ENCODE measurements at regions of chr11 and their contacts with region 1.

Region 1: DNA sequence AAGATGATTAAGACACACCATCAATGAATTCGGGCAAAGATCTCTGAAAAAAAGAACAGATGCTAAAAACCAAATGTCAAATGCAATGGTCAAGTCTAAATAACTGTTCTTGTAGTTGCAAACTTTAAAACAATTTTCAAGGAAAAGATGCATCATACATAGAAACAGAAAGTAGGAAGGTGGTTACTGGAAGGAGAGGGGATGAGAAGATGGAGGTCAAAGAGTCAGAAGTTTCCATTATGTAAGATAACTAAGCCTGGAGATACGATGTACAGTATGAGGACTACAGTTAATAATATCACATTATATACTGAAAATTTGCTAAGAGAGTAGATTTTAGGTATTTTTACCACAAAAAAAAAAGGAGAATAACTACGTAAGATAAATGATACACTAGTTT is 27.1 kb downstream of the CWF19L2 start:
- DNase-seq: no peak
- ATAC-seq: no peak
- H3K4me3 ChIP-seq: no peak overlapping the region
- H3K4me3 Mint-ChIP-seq: no peak overlapping the region
- H3K27ac ChIP-seq: no peak overlapping the region
- H3K27ac Mint-ChIP-seq: no peak overlapping the region
- H3K4me1 ChIP-seq: no peaks in the 10 kb centered on the region
- H3K4me1 Mint-ChIP-seq: peaks cover 6% of the 10 kb centered on the region
- H3K27me3 ChIP-seq: no peaks in the 10 kb centered on the region
- H3K27me3 Mint-ChIP-seq: no peaks in the 10 kb centered on the region
- CTCF ChIP-seq: no peak

Region 2: GRCh38 chr11:106733635-106734034 is 696.9 kb before region 1 on chr11:
- CTCF ChIA-PET with region 1: no interaction called
- POLR2A ChIA-PET with region 1: no interaction called
- intact Hi-C with region 1: no loop called
- DNase-seq: no peak
- ATAC-seq: no peak
- H3K4me3 ChIP-seq: no peak overlapping the region
- H3K4me3 Mint-ChIP-seq: no peak overlapping the region
- H3K27ac ChIP-seq: no peak overlapping the region
- H3K27ac Mint-ChIP-seq: no peak overlapping the region
- H3K4me1 ChIP-seq: no peaks in the 10 kb centered on the region
- H3K4me1 Mint-ChIP-seq: no peaks in the 10 kb centered on the region
- H3K27me3 ChIP-seq: no peaks in the 10 kb centered on the region
- H3K27me3 Mint-ChIP-seq: no peaks in the 10 kb centered on the region
- CTCF ChIP-seq: no peak

Region 3: DNA sequence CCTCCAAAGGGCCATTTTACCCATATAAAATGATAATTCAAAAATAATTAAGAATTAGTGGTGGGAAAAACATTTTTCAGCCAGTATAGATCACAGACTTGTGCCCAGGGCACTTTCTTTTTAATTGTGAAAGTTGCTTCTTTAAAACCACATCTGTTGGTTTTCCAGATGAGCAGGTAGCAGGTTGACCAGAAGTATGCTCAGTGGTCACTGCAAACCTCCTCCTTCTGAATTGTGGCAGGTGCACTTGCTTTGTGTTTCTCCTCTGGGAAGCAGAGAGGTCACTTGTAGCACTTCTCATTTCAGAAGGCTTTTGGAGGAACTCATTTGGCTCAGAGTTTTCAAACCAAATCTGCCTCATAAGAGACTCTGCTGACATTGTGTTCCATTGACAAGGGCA is 51.7 kb after region 1 on chr11:
- CTCF ChIA-PET with region 1: no interaction called
- POLR2A ChIA-PET with region 1: no interaction called
- intact Hi-C with region 1: loop called in 1 of 2 experiments (anchors 2 kb)
- DNase-seq: no peak
- ATAC-seq: no peak
- H3K4me3 ChIP-seq: no peak overlapping the region
- H3K4me3 Mint-ChIP-seq: no peak overlapping the region
- H3K27ac ChIP-seq: no peak overlapping the region
- H3K27ac Mint-ChIP-seq: no peak overlapping the region
- H3K4me1 ChIP-seq: no peaks in the 10 kb centered on the region
- H3K4me1 Mint-ChIP-seq: no peaks in the 10 kb centered on the region
- H3K27me3 ChIP-seq: peaks cover 0 to 2% of the 10 kb centered on the region in 2 experiments
- H3K27me3 Mint-ChIP-seq: peaks cover 13% of the 10 kb centered on the region
- CTCF ChIP-seq: no peak

Region 4: DNA sequence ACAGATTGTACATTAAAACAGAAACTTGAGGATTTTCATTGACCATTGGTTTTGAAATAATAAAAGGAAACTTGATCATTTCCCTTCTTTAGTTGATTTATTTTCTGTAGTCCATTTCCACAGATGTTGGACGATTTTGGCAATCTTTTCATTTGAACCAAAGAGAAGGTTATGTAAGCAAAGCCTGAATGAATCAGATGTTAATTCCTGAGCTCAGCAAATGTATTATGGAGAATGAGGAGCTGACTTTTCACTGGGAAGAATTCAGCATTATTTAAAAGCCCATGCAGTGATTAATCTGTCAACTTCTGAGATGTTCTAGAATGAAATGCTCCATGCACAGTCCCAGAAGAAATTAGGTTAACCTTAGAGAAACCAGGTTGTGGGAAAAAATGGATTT is 189.4 kb after region 1 on chr11:
- CTCF ChIA-PET with region 1: no interaction called
- POLR2A ChIA-PET with region 1: no interaction called
- intact Hi-C with region 1: no loop called
- DNase-seq: no peak
- ATAC-seq: no peak
- H3K4me3 ChIP-seq: no peak overlapping the region
- H3K4me3 Mint-ChIP-seq: no peak overlapping the region
- H3K27ac ChIP-seq: no peak overlapping the region
- H3K27ac Mint-ChIP-seq: no peak overlapping the region
- H3K4me1 ChIP-seq: no peaks in the 10 kb centered on the region
- H3K4me1 Mint-ChIP-seq: no peaks in the 10 kb centered on the region
- H3K27me3 ChIP-seq: peaks cover 0 to 2% of the 10 kb centered on the region in 2 experiments
- H3K27me3 Mint-ChIP-seq: peaks cover 30% of the 10 kb centered on the region
- CTCF ChIP-seq: no peak